ENCODE measurements at regions of chr20 and their contacts with region 1.

Region 1: GRCh38 chr20:34312544-34313217 is 9.5 kb upstream of the AHCY start:
- DNase-seq: peak; percentile 77
- H3K4me3 ChIP-seq: peak overlapping the region in 1 of 3 experiments; percentile 16
- H3K27ac ChIP-seq: no peak overlapping the region
- H3K4me1 ChIP-seq: peaks cover 38% of the 10 kb centered on the region
- H3K27me3 ChIP-seq: no peaks in the 10 kb centered on the region
- CTCF ChIP-seq: peak; percentile 100

Region 2: DNA sequence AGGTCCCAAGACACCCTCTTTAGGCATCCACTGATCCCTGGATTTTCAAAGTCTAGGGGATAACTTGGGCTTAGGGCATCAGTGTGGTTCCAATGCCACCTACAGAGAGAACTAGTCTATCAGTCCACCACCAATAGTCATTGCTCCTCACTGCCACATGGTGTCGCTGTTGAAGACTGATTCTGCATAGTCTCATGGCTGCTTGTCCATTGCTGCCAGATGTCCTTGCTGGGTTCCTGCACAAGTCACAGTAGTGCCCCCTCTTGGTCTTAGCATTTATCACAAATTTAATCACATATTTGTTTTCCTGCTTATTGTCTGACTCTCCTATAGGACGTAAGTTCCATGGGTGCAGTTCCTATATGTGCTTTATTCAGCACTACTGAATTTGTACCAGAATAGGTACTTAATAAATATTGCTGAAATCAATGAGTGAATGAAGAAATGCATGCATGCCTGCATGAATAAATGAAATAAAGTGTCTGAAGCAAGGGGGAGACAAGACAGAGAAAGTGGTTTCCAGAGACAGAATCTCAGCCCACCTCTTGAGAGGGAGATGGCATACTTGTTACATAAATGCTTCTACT is 364.9 kb before region 1 on chr20:
- CTCF ChIA-PET with region 1: no interaction called
- dilution Hi-C with region 1: no loop called
- in situ Hi-C with region 1: no loop called
- intact Hi-C with region 1: no loop called
- DNase-seq: peak; percentile 46
- H3K4me3 ChIP-seq: no peak overlapping the region
- H3K27ac ChIP-seq: no peak overlapping the region
- H3K4me1 ChIP-seq: no peaks in the 10 kb centered on the region
- H3K27me3 ChIP-seq: no peaks in the 10 kb centered on the region
- CTCF ChIP-seq: peak; percentile 60 to 77

Region 3: GRCh38 chr20:34190679-34191090 is 122.0 kb before region 1 on chr20:
- CTCF ChIA-PET with region 1: no interaction called
- dilution Hi-C with region 1: no loop called
- in situ Hi-C with region 1: no loop called
- intact Hi-C with region 1: loop called (anchors 5 kb)
- DNase-seq: peak; percentile 68
- H3K4me3 ChIP-seq: no peak overlapping the region
- H3K27ac ChIP-seq: no peak overlapping the region
- H3K4me1 ChIP-seq: no peaks in the 10 kb centered on the region
- H3K27me3 ChIP-seq: no peaks in the 10 kb centered on the region
- CTCF ChIP-seq: peak; percentile 84 to 89

Region 4: GRCh38 chr20:34215711-34216381 is 96.8 kb before region 1 on chr20:
- CTCF ChIA-PET with region 1: no interaction called
- dilution Hi-C with region 1: no loop called
- in situ Hi-C with region 1: no loop called
- intact Hi-C with region 1: no loop called
- DNase-seq: peak; percentile 61
- H3K4me3 ChIP-seq: peak overlapping the region; percentile 34 to 60 (median 54)
- H3K27ac ChIP-seq: no peak overlapping the region
- H3K4me1 ChIP-seq: no peaks in the 10 kb centered on the region
- H3K27me3 ChIP-seq: no peaks in the 10 kb centered on the region
- CTCF ChIP-seq: no peak

Region 5: GRCh38 chr20:34363062-34363464 is 50.4 kb after region 1 on chr20 and contains the start of gene ITCH:
- CTCF ChIA-PET with region 1: interaction called, 3 read pairs
- dilution Hi-C with region 1: no loop called
- in situ Hi-C with region 1: loop called in 1 of 2 experiments (anchors 10 kb)
- intact Hi-C with region 1: loop called (anchors 1 kb)
- DNase-seq: peak; percentile 92
- H3K4me3 ChIP-seq: peak within 1 kb of the TSS; percentile 83 to 98 (median 95)
- H3K27ac ChIP-seq: peak within 1 kb of the TSS; percentile 89
- H3K4me1 ChIP-seq: peaks cover 39% of the 10 kb centered on the region
- H3K27me3 ChIP-seq: no peaks in the 10 kb centered on the region
- CTCF ChIP-seq: no peak
- total RNA-seq, gene ITCH: 91.4 to 127 TPM

Region 6: GRCh38 chr20:34426026-34426425 is 113.3 kb after region 1 on chr20:
- CTCF ChIA-PET with region 1: no interaction called
- dilution Hi-C with region 1: no loop called
- in situ Hi-C with region 1: no loop called
- intact Hi-C with region 1: loop called (anchors 5 kb)
- DNase-seq: no peak
- H3K4me3 ChIP-seq: no peak overlapping the region
- H3K27ac ChIP-seq: no peak overlapping the region
- H3K4me1 ChIP-seq: no peaks in the 10 kb centered on the region
- H3K27me3 ChIP-seq: no peaks in the 10 kb centered on the region
- CTCF ChIP-seq: no peak

Region 7: GRCh38 chr20:34522969-34523871 is 210.5 kb after region 1 on chr20:
- CTCF ChIA-PET with region 1: interaction called, 10 read pairs
- dilution Hi-C with region 1: no loop called
- in situ Hi-C with region 1: loop called in 1 of 2 experiments (anchors 25 kb)
- intact Hi-C with region 1: loop called (anchors 1 kb)
- DNase-seq: peak; percentile 17
- H3K4me3 ChIP-seq: no peak overlapping the region
- H3K27ac ChIP-seq: no peak overlapping the region
- H3K4me1 ChIP-seq: peaks cover 21% of the 10 kb centered on the region
- H3K27me3 ChIP-seq: no peaks in the 10 kb centered on the region
- CTCF ChIP-seq: peak; percentile 45 to 57

Region 8: GRCh38 chr20:34693414-34693813 is 380.7 kb after region 1 on chr20:
- CTCF ChIA-PET with region 1: no interaction called
- dilution Hi-C with region 1: no loop called
- in situ Hi-C with region 1: no loop called
- intact Hi-C with region 1: no loop called
- DNase-seq: no peak
- H3K4me3 ChIP-seq: no peak overlapping the region
- H3K27ac ChIP-seq: no peak overlapping the region
- H3K4me1 ChIP-seq: no peaks in the 10 kb centered on the region
- H3K27me3 ChIP-seq: no peaks in the 10 kb centered on the region
- CTCF ChIP-seq: no peak

Region 9: GRCh38 chr20:34704177-34705007 is 391.7 kb after region 1 on chr20 and contains the start of gene TP53INP2:
- CTCF ChIA-PET with region 1: interaction called, 3 read pairs
- dilution Hi-C with region 1: no loop called
- in situ Hi-C with region 1: no loop called
- intact Hi-C with region 1: loop called (anchors 1 kb)
- DNase-seq: peak; percentile 69
- H3K4me3 ChIP-seq: peak within 1 kb of the TSS; percentile 49 to 78 (median 61)
- H3K27ac ChIP-seq: peak within 1 kb of the TSS; percentile 52
- H3K4me1 ChIP-seq: peaks cover 35% of the 10 kb centered on the region
- H3K27me3 ChIP-seq: no peaks in the 10 kb centered on the region
- CTCF ChIP-seq: no peak
- total RNA-seq, gene TP53INP2: 2.5 to 4.4 TPM

Measured in mammary epithelial cell (primary cell).